T-cell (primary cell): ENCODE measurements at regions of chr2 and their contacts with region 1.

Region 1: DNA sequence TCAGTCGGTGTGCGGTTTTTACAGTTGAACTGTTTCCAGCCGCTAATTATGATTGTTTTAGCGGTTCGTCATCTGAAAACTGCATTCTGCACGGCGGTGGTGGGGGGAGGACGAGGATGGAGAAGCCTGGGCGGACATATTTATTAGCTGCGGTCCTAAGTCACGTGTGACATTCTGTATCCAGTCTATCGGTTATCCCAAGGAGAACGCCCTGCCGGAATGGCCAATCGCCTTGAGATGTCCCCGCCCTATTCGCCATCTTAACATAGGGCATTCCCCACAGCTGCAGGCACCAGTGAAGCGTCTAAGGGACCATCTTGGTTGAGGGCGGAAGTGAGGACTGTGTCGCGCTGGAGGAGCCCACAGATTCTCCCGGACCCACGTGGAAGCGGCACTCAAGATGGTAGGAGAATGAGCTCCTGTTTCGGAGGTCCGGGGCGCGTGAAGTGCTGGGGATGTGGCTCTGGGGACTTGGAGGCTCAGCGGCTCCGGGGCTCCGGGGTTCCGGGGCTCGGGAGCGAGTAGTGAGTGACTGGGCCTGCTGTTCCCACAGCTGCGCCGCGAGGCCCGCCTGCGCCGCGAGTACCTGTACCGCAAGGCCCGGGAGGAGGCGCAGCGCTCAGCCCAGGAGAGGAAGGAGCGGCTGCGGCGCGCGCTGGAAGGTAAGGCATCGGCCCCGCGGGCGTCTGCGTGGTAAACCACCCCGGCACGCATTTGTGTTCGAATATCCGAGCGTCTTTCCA is at the start of gene IMP4:
- DNase-seq: peak; percentile 90 to 99 (median 97)
- ATAC-seq: peak; percentile 86 to 90 (median 88)
- H3K4me3 ChIP-seq: peak within 1 kb of the TSS; percentile 87 to 96
- H3K4me3 Mint-ChIP-seq: peak within 1 kb of the TSS; percentile 99 to 100 (median 99)
- H3K27ac ChIP-seq: peak within 1 kb of the TSS; percentile 98
- H3K27ac Mint-ChIP-seq: peak within 1 kb of the TSS; percentile 99
- H3K4me1 ChIP-seq: peaks cover 6 to 29% of the 10 kb centered on the region in 2 experiments
- H3K4me1 Mint-ChIP-seq: peaks cover 36 to 46% (median 40%) of the 10 kb centered on the region in 3 donors
- H3K27me3 ChIP-seq: no peaks in the 10 kb centered on the region
- H3K27me3 Mint-ChIP-seq: no peaks in the 10 kb centered on the region
- total RNA-seq, gene IMP4: 70.7 to 93.7 (median 86.9) TPM

Region 2: GRCh38 chr2:130181325-130181879 is 161.3 kb before region 1 on chr2 and contains the start of gene SMPD4:
- CTCF ChIA-PET with region 1: interaction called in 1 of 2 experiments, 51 read pairs
- POLR2A ChIA-PET with region 1: interaction called, 7 to 14 read pairs
- DNase-seq: peak; percentile 94 to 99 (median 98)
- ATAC-seq: peak; percentile 75 to 80 (median 76)
- H3K4me3 ChIP-seq: peak within 1 kb of the TSS; percentile 66 to 83
- H3K4me3 Mint-ChIP-seq: peak within 1 kb of the TSS; percentile 89 to 92 (median 89)
- H3K27ac ChIP-seq: peak within 1 kb of the TSS; percentile 88
- H3K27ac Mint-ChIP-seq: peak within 1 kb of the TSS; percentile 92 to 95
- H3K4me1 ChIP-seq: peaks cover 8 to 36% of the 10 kb centered on the region in 2 experiments
- H3K4me1 Mint-ChIP-seq: peaks cover 18 to 36% (median 30%) of the 10 kb centered on the region in 3 donors
- H3K27me3 ChIP-seq: no peaks in the 10 kb centered on the region
- H3K27me3 Mint-ChIP-seq: no peaks in the 10 kb centered on the region
- total RNA-seq, gene SMPD4: 56.3 to 75.7 (median 62.9) TPM

Region 3: DNA sequence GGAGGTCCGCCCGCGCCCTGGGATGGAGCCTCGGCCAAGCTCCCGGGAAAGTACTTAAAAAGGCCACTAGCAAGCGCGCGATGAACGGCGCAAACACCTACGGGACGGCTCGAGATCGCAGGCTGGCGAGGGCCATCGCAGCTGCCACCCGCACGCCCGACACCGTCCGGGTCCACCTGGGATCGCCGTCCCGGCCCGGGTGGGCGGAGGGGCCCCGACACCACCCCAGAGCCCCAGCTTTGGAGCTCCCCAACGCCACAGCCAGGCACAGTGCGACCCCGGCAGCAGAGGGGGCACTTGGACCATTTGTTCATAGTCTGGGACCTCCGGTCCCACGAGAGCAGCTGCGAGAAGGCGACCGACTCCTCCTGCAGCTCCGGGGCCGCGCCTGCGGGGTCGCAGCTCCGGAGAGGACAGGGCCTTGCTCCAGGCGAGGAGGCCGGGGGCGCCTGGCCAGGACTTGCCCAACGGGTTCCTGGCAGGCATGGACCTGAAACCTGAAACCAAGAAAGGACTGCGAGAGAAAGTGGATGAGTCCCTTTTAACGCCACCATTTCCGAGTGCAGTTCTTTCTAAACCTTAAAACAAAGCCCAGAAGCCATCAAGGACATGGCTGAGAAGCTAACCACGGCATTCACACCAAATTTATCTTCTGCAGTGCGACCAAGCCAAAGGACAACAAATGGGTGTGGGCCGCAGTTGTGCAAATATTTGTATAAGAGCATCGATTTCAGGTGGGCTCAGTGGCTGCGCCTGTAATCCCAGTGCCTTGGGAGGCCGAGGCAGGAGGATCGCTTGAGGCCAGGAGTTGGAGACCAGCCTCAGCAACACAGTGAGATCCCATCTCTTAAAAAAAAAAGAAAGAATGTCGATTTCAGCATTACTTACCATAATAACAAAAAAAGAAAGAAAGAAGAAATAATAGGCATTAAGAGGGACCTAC is 54.0 kb before region 1 on chr2:
- CTCF ChIA-PET with region 1: no interaction called
- POLR2A ChIA-PET with region 1: no interaction called
- DNase-seq: no peak
- ATAC-seq: no peak
- H3K4me3 ChIP-seq: no peak overlapping the region
- H3K4me3 Mint-ChIP-seq: no peak overlapping the region
- H3K27ac ChIP-seq: no peak overlapping the region
- H3K27ac Mint-ChIP-seq: no peak overlapping the region
- H3K4me1 ChIP-seq: no peaks in the 10 kb centered on the region
- H3K4me1 Mint-ChIP-seq: no peaks in the 10 kb centered on the region
- H3K27me3 ChIP-seq: peaks cover 0 to 30% of the 10 kb centered on the region in 2 experiments
- H3K27me3 Mint-ChIP-seq: peaks cover 2 to 17% of the 10 kb centered on the region in 2 donors

Region 4: GRCh38 chr2:130332271-130333073 is 10.2 kb before region 1 on chr2:
- CTCF ChIA-PET with region 1: interaction called, 12 to 35 read pairs
- POLR2A ChIA-PET with region 1: interaction called, 4 to 7 read pairs
- DNase-seq: peak in 34 of 35 experiments; percentile 8 to 77 (median 56)
- ATAC-seq: peak; percentile 84 to 88 (median 86)
- H3K4me3 ChIP-seq: peak overlapping the region in 1 of 2 donors; percentile 49
- H3K4me3 Mint-ChIP-seq: peak overlapping the region; percentile 8 to 35 (median 26)
- H3K27ac ChIP-seq: no peak overlapping the region
- H3K27ac Mint-ChIP-seq: no peak overlapping the region
- H3K4me1 ChIP-seq: peaks cover 0 to 7% of the 10 kb centered on the region in 2 experiments
- H3K4me1 Mint-ChIP-seq: peaks cover 0 to 8% (median 5%) of the 10 kb centered on the region in 3 donors
- H3K27me3 ChIP-seq: peaks cover 5 to 30% of the 10 kb centered on the region in 2 experiments
- H3K27me3 Mint-ChIP-seq: peaks cover 25 to 26% of the 10 kb centered on the region in 2 donors